ENCODE measurements at regions of chr11 and their contacts with region 1.

Region 1: DNA sequence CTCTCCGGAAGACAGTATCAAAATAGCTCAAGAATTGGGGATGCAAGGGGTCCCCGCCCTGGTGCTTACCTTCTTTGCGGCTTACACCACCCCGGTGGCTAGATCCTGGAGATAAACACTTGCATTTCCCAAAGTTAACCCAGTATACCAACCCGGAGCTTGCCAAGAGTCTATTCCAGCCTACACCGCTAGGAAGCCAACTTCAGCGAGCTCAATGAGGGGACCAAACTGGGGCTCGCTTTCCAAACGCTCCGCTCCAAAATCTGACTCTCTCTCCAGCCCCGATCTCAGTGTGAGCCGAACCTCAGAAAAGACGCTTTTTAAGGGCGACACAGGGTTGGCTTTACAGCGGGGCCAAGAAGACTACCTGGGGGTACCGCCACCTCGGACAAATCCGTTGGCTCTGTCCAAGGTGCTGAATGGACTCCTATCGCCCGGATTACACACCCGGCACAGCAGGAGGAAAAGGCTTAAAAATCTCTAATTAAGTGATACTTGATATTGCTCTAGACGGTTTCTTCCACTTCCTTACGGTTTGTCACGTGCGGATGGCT is 20.1 kb upstream of the BDNF start:
- DNase-seq: peak; percentile 68
- ATAC-seq: no peak
- H3K4me3 ChIP-seq: peak overlapping the region; percentile 0; the same call in 1 of the 2 replicates
- H3K27ac ChIP-seq: no peak overlapping the region
- H3K4me1 ChIP-seq: peaks cover 6% of the 10 kb centered on the region
- H3K27me3 ChIP-seq: no peaks in the 10 kb centered on the region
- CTCF ChIP-seq: 0 out of 2 replicates have a peak, but pooled peaks have one; percentile 18
- POLR2A ChIP-seq: no peak
- RAD21 ChIP-seq: no peak

Region 2: GRCh38 chr11:27894552-27894951 is 174.2 kb after region 1 on chr11:
- CTCF ChIA-PET with region 1: no interaction called
- POLR2A ChIA-PET with region 1: no interaction called
- dilution Hi-C with region 1: no loop called
- in situ Hi-C with region 1: loop called (anchors 10 kb)
- intact Hi-C with region 1: no loop called
- DNase-seq: no peak
- ATAC-seq: no peak
- H3K4me3 ChIP-seq: no peak overlapping the region
- H3K27ac ChIP-seq: no peak overlapping the region
- H3K4me1 ChIP-seq: peaks cover 2% of the 10 kb centered on the region; the same call in 1 of the 2 replicates
- H3K27me3 ChIP-seq: no peaks in the 10 kb centered on the region
- CTCF ChIP-seq: no peak
- POLR2A ChIP-seq: no peak
- RAD21 ChIP-seq: no peak

Region 3: GRCh38 chr11:27945348-27945747 is 225.0 kb after region 1 on chr11:
- CTCF ChIA-PET with region 1: no interaction called
- POLR2A ChIA-PET with region 1: no interaction called
- dilution Hi-C with region 1: no loop called
- in situ Hi-C with region 1: no loop called
- intact Hi-C with region 1: no loop called
- DNase-seq: no peak
- ATAC-seq: no peak
- H3K4me3 ChIP-seq: no peak overlapping the region
- H3K27ac ChIP-seq: no peak overlapping the region
- H3K4me1 ChIP-seq: peaks cover under 1% of the 10 kb centered on the region; the same call in 1 of the 2 replicates
- H3K27me3 ChIP-seq: no peaks in the 10 kb centered on the region
- CTCF ChIP-seq: no peak
- POLR2A ChIP-seq: no peak
- RAD21 ChIP-seq: no peak

Region 4: DNA sequence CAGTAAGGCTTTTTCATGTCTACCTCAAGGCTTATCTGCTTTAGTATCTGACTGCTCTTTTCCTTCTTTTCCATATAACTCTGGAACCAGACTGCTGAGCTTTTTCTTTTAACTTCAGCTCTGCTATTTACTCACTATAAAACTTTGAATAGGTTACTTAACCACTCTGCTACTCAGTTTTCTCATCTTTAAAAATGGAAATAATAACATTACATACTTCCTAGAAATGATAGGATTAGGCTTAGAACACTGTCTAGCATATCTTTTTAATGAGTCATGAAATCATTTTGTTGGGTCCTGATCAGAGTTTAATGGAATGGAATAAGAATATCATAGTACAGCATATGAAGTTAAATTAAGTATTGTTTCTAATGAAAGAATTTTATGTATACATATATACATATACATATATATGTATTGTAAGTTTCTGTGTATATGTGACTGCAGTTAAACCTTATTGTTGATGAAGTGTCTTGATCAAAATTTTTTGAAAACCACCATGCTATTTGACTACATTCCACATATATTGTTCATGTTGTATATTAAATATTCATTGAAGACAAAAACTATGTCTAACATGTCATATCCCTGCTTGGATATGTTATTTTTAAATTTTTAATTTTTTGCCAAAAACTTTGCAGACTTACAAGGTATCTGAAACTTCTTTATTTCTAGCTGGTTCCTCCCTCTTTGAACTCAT is 508.0 kb after region 1 on chr11:
- CTCF ChIA-PET with region 1: no interaction called
- POLR2A ChIA-PET with region 1: no interaction called
- dilution Hi-C with region 1: no loop called
- in situ Hi-C with region 1: no loop called
- intact Hi-C with region 1: loop called (anchors 5 kb)
- DNase-seq: peak; percentile 68
- ATAC-seq: peak; percentile 77
- H3K4me3 ChIP-seq: no peak overlapping the region
- H3K27ac ChIP-seq: no peak overlapping the region
- H3K4me1 ChIP-seq: peaks cover 2% of the 10 kb centered on the region
- H3K27me3 ChIP-seq: no peaks in the 10 kb centered on the region
- CTCF ChIP-seq: no peak
- POLR2A ChIP-seq: no peak
- RAD21 ChIP-seq: no peak

Region 5: GRCh38 chr11:28464252-28464867 is 744.0 kb after region 1 on chr11:
- CTCF ChIA-PET with region 1: no interaction called
- POLR2A ChIA-PET with region 1: interaction called, 3 read pairs
- dilution Hi-C with region 1: no loop called
- in situ Hi-C with region 1: no loop called
- intact Hi-C with region 1: loop called (anchors 5 kb)
- DNase-seq: peak; percentile 86
- ATAC-seq: peak; percentile 77
- H3K4me3 ChIP-seq: no peak overlapping the region
- H3K27ac ChIP-seq: peak overlapping the region; percentile 98
- H3K4me1 ChIP-seq: peaks cover 22% of the 10 kb centered on the region
- H3K27me3 ChIP-seq: no peaks in the 10 kb centered on the region
- CTCF ChIP-seq: no peak
- POLR2A ChIP-seq: no peak
- RAD21 ChIP-seq: no peak; the same call in none of the 2 replicates

Region 6: DNA sequence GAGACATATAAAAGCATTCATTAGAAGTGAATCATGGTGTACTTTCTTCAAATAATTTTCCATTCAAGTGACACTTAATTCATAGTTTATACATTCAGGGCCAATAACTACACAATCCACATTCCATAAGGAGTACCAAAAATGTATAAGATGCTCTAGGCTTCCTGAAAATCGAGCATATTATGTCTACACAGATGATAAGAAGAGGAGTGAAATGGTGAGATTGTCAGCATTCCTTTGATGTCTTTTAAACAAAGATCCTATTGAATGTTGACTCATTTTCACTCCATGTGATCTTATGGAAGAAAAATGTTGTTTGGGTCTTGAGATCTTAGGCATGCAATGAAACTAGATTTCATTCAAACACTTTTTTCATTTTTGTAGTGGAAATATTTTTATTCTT is 1453.3 kb after region 1 on chr11:
- CTCF ChIA-PET with region 1: no interaction called
- POLR2A ChIA-PET with region 1: no interaction called
- dilution Hi-C with region 1: no loop called
- in situ Hi-C with region 1: loop called (anchors 25 kb)
- intact Hi-C with region 1: loop called (anchors 5 kb)
- DNase-seq: peak; percentile 99
- ATAC-seq: peak; percentile 86
- H3K4me3 ChIP-seq: no peak overlapping the region
- H3K27ac ChIP-seq: peak overlapping the region; percentile 99; the same call in 1 of the 2 replicates
- H3K4me1 ChIP-seq: peaks cover 6% of the 10 kb centered on the region
- H3K27me3 ChIP-seq: no peaks in the 10 kb centered on the region
- CTCF ChIP-seq: no peak
- POLR2A ChIP-seq: no peak
- RAD21 ChIP-seq: peak; percentile 19; the same call in 1 of the 2 replicates

Measured in IMR-90 (cell line).